SK-N-SH (cell line): ENCODE measurements at regions of chr1 and their contacts with region 1.

Region 1: GRCh38 chr1:179882243-179883039 is at the start of gene TOR1AIP1:
- DNase-seq: peak; percentile 96
- H3K4me3 ChIP-seq: peak within 1 kb of the TSS; percentile 79 to 97
- H3K27ac ChIP-seq: peak within 1 kb of the TSS; percentile 98 to 99
- H3K4me1 ChIP-seq: peaks cover 9 to 14% of the 10 kb centered on the region in 2 experiments; a peak in 2 of 4 replicates
- H3K27me3 ChIP-seq: no peaks in the 10 kb centered on the region
- CTCF ChIP-seq: peak; percentile 31
- EP300 ChIP-seq: peak; percentile 38 to 39; a peak in 1 of 4 replicates
- RAD21 ChIP-seq: peak; percentile 31; the same call in 1 of the 2 replicates
- polyA plus RNA-seq, gene TOR1AIP1: 11.8 and 15.1 TPM in 2 replicates

Region 2: GRCh38 chr1:179867807-179868330 is 14.6 kb before region 1 on chr1:
- CTCF ChIA-PET with region 1: interaction called, 10 read pairs
- POLR2A ChIA-PET with region 1: interaction called, 3 read pairs
- DNase-seq: peak; percentile 63
- H3K4me3 ChIP-seq: no peak overlapping the region
- H3K27ac ChIP-seq: no peak overlapping the region
- H3K4me1 ChIP-seq: peaks cover 0 to 4% of the 10 kb centered on the region in 2 experiments; a peak in 3 of 4 replicates
- H3K27me3 ChIP-seq: no peaks in the 10 kb centered on the region
- CTCF ChIP-seq: peak; percentile 82
- EP300 ChIP-seq: no peak
- RAD21 ChIP-seq: peak; percentile 65